ENCODE measurements at regions of chr20 and their contacts with region 1.

Region 1: GRCh38 chr20:44966030-44966961 is at the start of gene STK4:
- DNase-seq: peak; percentile 93 to 98 (median 96)
- H3K4me3 ChIP-seq: peak within 1 kb of the TSS; percentile 87 to 96
- H3K4me3 Mint-ChIP-seq: peak within 1 kb of the TSS; percentile 93 to 100 (median 98)
- H3K27ac ChIP-seq: peak within 1 kb of the TSS; percentile 89
- H3K27ac Mint-ChIP-seq: peak within 1 kb of the TSS; percentile 89 to 96 (median 91)
- H3K4me1 ChIP-seq: peaks cover 38% of the 10 kb centered on the region
- H3K4me1 Mint-ChIP-seq: peaks cover 28 to 73% (median 38%) of the 10 kb centered on the region in 4 donors
- H3K27me3 ChIP-seq: no peaks in the 10 kb centered on the region
- H3K27me3 Mint-ChIP-seq: no peaks in the 10 kb centered on the region
- total RNA-seq, gene STK4: 358 to 374 TPM

Region 2: GRCh38 chr20:44747166-44748004 is 218.9 kb before region 1 on chr20:
- CTCF ChIA-PET with region 1: no interaction called
- POLR2A ChIA-PET with region 1: no interaction called
- intact Hi-C with region 1: loop called (anchors 5 kb)
- DNase-seq: peak; percentile 27 to 57 (median 43)
- H3K4me3 ChIP-seq: no peak overlapping the region
- H3K4me3 Mint-ChIP-seq: peak overlapping the region in 6 of 8 donors; percentile 34 to 58 (median 47)
- H3K27ac ChIP-seq: no peak overlapping the region
- H3K27ac Mint-ChIP-seq: no peak overlapping the region
- H3K4me1 ChIP-seq: peaks cover 5% of the 10 kb centered on the region
- H3K4me1 Mint-ChIP-seq: peaks cover 7 to 13% (median 11%) of the 10 kb centered on the region in 4 donors
- H3K27me3 ChIP-seq: peaks cover 11% of the 10 kb centered on the region
- H3K27me3 Mint-ChIP-seq: peaks cover 12 to 19% of the 10 kb centered on the region in 2 donors

Region 3: DNA sequence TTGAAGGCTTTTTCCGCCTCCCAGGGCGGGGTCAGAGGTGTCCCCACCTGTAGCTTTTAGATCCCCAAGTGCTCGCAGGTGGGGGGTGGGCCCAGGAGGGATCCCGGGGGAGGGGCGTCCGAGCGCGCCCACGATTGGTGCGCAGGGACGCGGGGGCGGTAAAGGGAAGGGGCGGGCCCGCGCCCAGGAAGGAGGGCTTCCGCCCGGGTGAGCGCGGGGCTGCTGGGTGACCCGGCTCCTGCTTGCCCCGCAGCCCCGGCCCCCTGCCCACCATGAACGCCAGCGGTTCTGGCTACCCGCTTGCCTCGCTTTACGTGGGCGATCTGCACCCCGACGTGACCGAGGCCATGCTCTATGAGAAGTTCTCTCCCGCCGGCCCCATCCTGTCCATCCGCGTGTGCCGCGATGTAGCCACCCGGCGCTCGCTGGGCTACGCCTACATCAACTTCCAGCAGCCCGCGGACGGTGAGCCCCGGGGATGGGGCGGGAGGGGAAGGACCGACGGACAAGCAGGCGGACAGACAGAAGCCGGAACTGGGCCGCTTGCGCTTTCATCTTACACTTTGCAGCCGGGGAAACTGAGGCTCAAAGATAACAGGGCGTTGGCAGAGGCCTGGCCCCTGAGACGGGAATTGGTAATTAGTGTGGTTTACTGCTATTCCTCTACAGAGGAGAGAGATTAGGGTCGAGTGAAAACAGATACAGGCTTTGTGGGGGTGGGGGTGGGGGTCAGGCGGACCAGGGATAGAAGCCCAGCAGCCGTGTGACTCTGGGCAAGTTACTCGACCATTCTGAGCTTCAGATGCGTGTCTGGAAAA is 56.2 kb before region 1 on chr20 and contains the start of gene PABPC1L:
- CTCF ChIA-PET with region 1: interaction called, 3 read pairs
- POLR2A ChIA-PET with region 1: interaction called, 7 read pairs
- intact Hi-C with region 1: loop called (anchors 2 kb)
- DNase-seq: peak; percentile 68 to 83 (median 71)
- H3K4me3 ChIP-seq: peak within 1 kb of the TSS; percentile 42 to 61
- H3K4me3 Mint-ChIP-seq: peak within 1 kb of the TSS; percentile 82 to 92 (median 86)
- H3K27ac ChIP-seq: peak within 1 kb of the TSS; percentile 40
- H3K27ac Mint-ChIP-seq: peak within 1 kb of the TSS; percentile 29 to 86 (median 74)
- H3K4me1 ChIP-seq: peaks cover 19% of the 10 kb centered on the region
- H3K4me1 Mint-ChIP-seq: peaks cover 14 to 45% (median 30%) of the 10 kb centered on the region in 4 donors
- H3K27me3 ChIP-seq: no peaks in the 10 kb centered on the region
- H3K27me3 Mint-ChIP-seq: no peaks in the 10 kb centered on the region
- total RNA-seq, gene PABPC1L: 46.5 to 50.0 TPM

Region 4: DNA sequence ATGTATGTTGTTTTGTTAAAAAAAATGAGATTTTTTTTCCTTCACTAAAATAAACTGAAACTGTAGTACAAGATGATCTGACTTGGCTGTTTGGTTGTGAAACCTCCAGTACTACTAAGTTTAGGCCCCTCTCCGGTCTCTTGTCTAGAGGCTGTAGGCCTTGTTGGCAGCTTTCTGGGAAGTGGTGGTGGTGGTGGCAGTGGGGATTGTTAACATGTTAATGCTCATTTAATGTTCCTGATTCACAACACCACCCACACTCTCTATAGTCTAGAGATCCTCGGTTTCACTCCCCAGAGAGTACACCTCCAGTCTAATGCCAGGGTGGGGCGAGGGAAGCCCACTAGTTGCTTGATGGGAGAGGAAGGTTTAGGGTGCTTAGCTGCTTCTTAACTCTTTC is 24.1 kb after region 1 on chr20:
- CTCF ChIA-PET with region 1: interaction called, 12 read pairs
- POLR2A ChIA-PET with region 1: interaction called, 91 read pairs
- intact Hi-C with region 1: loop called (anchors 1 kb)
- DNase-seq: peak in 1 of 5 donors; percentile 16
- H3K4me3 ChIP-seq: peak overlapping the region; percentile 25 to 34
- H3K4me3 Mint-ChIP-seq: peak overlapping the region; percentile 73 to 89 (median 88)
- H3K27ac ChIP-seq: peak overlapping the region; percentile 68
- H3K27ac Mint-ChIP-seq: peak overlapping the region; percentile 82 to 94 (median 91)
- H3K4me1 ChIP-seq: peaks cover 94% of the 10 kb centered on the region
- H3K4me1 Mint-ChIP-seq: peaks cover 45 to 89% (median 69%) of the 10 kb centered on the region in 4 donors
- H3K27me3 ChIP-seq: no peaks in the 10 kb centered on the region
- H3K27me3 Mint-ChIP-seq: no peaks in the 10 kb centered on the region

Region 5: DNA sequence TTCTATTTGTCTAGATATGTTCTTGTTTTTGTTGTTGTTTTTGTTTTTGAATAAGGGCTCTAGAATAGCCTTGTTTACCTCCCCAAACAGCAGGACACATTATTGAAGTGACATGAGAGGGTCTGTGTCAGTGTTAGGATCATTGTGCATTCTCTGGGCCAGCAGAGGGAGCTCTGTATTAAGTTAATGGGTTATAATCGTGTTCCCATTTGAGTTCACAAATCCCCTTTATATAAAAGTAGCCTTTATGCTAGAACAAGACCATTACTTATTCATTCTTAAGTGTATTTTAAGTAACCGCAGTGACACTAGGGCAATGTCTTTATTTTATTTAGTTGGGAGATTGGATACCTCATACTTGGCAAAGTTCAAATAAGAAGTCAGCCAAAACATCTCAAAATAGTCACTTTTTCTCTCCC is 44.8 kb after region 1 on chr20:
- CTCF ChIA-PET with region 1: interaction called, 10 read pairs
- POLR2A ChIA-PET with region 1: interaction called, 9 read pairs
- intact Hi-C with region 1: loop called (anchors 2 kb)
- DNase-seq: peak; percentile 25 to 51 (median 40)
- H3K4me3 ChIP-seq: no peak overlapping the region
- H3K4me3 Mint-ChIP-seq: peak overlapping the region in 3 of 8 donors; percentile 17 to 54 (median 22)
- H3K27ac ChIP-seq: no peak overlapping the region
- H3K27ac Mint-ChIP-seq: peak overlapping the region in 3 of 7 donors; percentile 41 to 74 (median 57)
- H3K4me1 ChIP-seq: peaks cover 63% of the 10 kb centered on the region
- H3K4me1 Mint-ChIP-seq: peaks cover 47 to 81% (median 63%) of the 10 kb centered on the region in 4 donors
- H3K27me3 ChIP-seq: no peaks in the 10 kb centered on the region
- H3K27me3 Mint-ChIP-seq: no peaks in the 10 kb centered on the region

Region 6: DNA sequence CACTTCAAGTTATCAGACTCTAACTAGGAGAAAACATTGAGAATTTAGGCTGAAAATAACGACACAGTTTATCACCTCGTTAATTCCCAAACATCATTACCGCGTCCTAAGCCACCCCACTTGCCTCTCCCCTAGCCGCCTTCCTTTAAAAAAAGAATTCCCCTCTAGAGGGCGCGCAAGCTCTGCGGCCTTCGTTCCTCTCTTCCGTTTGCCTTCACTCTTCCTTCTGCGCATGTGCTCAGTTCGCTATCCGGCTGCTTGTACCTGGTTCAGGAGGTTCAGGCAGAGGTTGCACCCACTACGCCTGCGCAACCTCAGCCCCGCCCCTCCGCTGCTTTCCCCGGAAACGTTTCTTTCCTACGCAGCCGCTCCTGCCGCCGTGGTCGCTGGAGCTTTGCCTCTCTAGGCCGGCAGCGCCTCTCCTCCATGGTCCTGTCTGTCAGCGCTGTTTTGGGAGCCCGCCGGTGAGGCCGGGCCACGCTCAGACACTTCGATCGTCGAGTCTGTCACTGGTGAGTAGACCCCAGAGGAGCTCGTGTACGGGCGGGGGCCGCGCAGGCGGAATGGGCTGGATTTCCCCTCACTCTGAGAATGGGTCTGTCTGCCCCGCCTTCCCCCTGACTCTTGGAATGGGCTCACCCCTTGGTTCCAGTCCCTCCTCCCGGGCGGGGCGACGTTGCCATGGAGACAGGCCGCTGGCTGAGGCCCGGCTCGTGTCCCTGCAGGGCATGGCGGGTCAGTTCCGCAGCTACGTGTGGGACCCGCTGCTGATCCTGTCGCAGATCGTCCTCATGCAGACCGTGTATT is 396.7 kb after region 1 on chr20 and contains the start of gene SYS1:
- CTCF ChIA-PET with region 1: no interaction called
- POLR2A ChIA-PET with region 1: no interaction called
- intact Hi-C with region 1: loop called (anchors 5 kb)
- DNase-seq: peak; percentile 98 to 99 (median 99)
- H3K4me3 ChIP-seq: peak within 1 kb of the TSS; percentile 67 to 83
- H3K4me3 Mint-ChIP-seq: peak within 1 kb of the TSS; percentile 95 to 99 (median 98)
- H3K27ac ChIP-seq: peak within 1 kb of the TSS; percentile 97
- H3K27ac Mint-ChIP-seq: peak within 1 kb of the TSS; percentile 98 to 100 (median 100)
- H3K4me1 ChIP-seq: peaks cover 41% of the 10 kb centered on the region
- H3K4me1 Mint-ChIP-seq: peaks cover 28 to 59% (median 52%) of the 10 kb centered on the region in 4 donors
- H3K27me3 ChIP-seq: no peaks in the 10 kb centered on the region
- H3K27me3 Mint-ChIP-seq: no peaks in the 10 kb centered on the region
- total RNA-seq, gene SYS1: 56.4 to 56.6 TPM